ENCODE measurements at regions of chrX and their contacts with region 1.

Region 1: GRCh38 chrX:134969726-134970125 is 21.1 kb upstream of the SMIM10 start:
- DNase-seq: no peak
- H3K4me3 ChIP-seq: no peak overlapping the region
- H3K4me3 Mint-ChIP-seq: no peak overlapping the region
- H3K27ac ChIP-seq: no peak overlapping the region
- H3K27ac Mint-ChIP-seq: no peak overlapping the region
- H3K4me1 ChIP-seq: no peaks in the 10 kb centered on the region
- H3K4me1 Mint-ChIP-seq: no peaks in the 10 kb centered on the region
- H3K27me3 ChIP-seq: no peaks in the 10 kb centered on the region
- H3K27me3 Mint-ChIP-seq: peaks cover 0 to 5% of the 10 kb centered on the region in 2 donors

Region 2: GRCh38 chrX:134949271-134949670 is 20.5 kb before region 1 on chrX:
- CTCF ChIA-PET with region 1: no interaction called
- POLR2A ChIA-PET with region 1: no interaction called
- intact Hi-C with region 1: no loop called
- DNase-seq: no peak
- H3K4me3 ChIP-seq: no peak overlapping the region
- H3K4me3 Mint-ChIP-seq: no peak overlapping the region
- H3K27ac ChIP-seq: no peak overlapping the region
- H3K27ac Mint-ChIP-seq: no peak overlapping the region
- H3K4me1 ChIP-seq: no peaks in the 10 kb centered on the region
- H3K4me1 Mint-ChIP-seq: peaks cover 0 to 3% (median 0%) of the 10 kb centered on the region in 4 donors
- H3K27me3 ChIP-seq: no peaks in the 10 kb centered on the region
- H3K27me3 Mint-ChIP-seq: no peaks in the 10 kb centered on the region

Region 3: GRCh38 chrX:135003876-135004623 is 34.3 kb after region 1 on chrX:
- CTCF ChIA-PET with region 1: interaction called, 5 read pairs
- POLR2A ChIA-PET with region 1: no interaction called
- intact Hi-C with region 1: loop called (anchors 1 kb)
- DNase-seq: peak; percentile 87 to 88 (median 88)
- H3K4me3 ChIP-seq: peak overlapping the region; percentile 23 to 62
- H3K4me3 Mint-ChIP-seq: peak overlapping the region; percentile 86 to 91 (median 88)
- H3K27ac ChIP-seq: no peak overlapping the region
- H3K27ac Mint-ChIP-seq: peak overlapping the region; percentile 65 to 95 (median 73)
- H3K4me1 ChIP-seq: peaks cover 7% of the 10 kb centered on the region
- H3K4me1 Mint-ChIP-seq: peaks cover 5 to 13% (median 10%) of the 10 kb centered on the region in 4 donors
- H3K27me3 ChIP-seq: no peaks in the 10 kb centered on the region
- H3K27me3 Mint-ChIP-seq: no peaks in the 10 kb centered on the region

Region 4: DNA sequence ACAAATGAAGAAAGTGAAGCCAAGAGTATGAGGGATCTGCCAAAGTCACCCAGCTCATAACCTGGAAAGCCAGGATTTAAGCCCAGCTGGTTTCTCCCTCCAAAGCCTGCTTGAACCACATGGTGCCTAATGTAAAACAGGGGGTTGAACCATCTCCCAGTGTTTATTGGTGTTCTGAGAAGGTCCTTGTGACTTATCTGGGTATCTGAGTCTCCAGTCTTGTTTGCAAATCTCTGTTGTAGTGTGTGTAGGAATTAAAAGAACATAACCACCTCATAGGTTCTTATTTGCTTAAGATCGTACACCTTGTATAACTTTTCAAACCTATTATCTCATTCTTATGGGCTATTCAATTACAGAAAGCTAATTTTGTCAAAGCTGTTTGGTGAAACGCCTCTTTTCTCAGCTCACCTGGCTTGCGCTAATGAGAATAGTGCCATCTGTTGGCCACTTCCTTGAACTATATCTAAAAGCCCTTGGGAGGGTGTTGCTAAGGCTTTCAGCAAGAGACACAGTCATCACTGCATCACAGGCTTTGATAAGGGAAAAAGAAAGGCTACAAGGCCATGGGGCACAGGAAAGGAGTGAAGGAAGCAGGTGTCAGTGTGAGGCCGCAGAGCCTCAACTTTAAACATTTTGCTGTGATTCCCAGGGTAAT is 116.6 kb after region 1 on chrX:
- CTCF ChIA-PET with region 1: interaction called, 9 read pairs
- POLR2A ChIA-PET with region 1: no interaction called
- intact Hi-C with region 1: loop called (anchors 1 kb)
- DNase-seq: peak; percentile 56 to 67 (median 62)
- H3K4me3 ChIP-seq: no peak overlapping the region
- H3K4me3 Mint-ChIP-seq: no peak overlapping the region
- H3K27ac ChIP-seq: no peak overlapping the region
- H3K27ac Mint-ChIP-seq: peak overlapping the region in 5 of 7 donors; percentile 1 to 78 (median 15)
- H3K4me1 ChIP-seq: no peaks in the 10 kb centered on the region
- H3K4me1 Mint-ChIP-seq: peaks cover 1 to 6% (median 5%) of the 10 kb centered on the region in 4 donors
- H3K27me3 ChIP-seq: no peaks in the 10 kb centered on the region
- H3K27me3 Mint-ChIP-seq: peaks cover 0 to 5% of the 10 kb centered on the region in 2 donors

Region 5: DNA sequence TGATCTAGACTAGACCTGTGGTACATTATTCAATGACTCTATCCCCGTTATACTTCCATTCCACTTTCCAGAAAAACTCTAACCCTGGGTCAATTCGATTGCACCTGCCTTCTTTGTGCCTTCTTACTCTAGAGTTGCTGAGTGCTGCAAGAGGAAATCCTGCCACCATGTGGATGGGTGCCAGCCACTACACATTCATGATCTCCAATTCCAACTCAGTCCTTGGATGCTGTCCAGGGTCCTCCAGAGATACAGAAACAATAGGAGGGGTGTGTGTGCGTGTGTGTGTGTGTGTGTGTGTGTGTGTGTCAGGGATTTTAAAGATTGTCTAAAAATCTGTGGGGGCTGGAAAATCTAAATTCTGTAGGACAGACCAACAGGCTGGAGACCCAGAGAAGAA is 507.9 kb after region 1 on chrX:
- CTCF ChIA-PET with region 1: no interaction called
- POLR2A ChIA-PET with region 1: no interaction called
- intact Hi-C with region 1: loop called (anchors 1 kb)
- DNase-seq: peak; percentile 44 to 50 (median 46)
- H3K4me3 ChIP-seq: no peak overlapping the region
- H3K4me3 Mint-ChIP-seq: no peak overlapping the region
- H3K27ac ChIP-seq: no peak overlapping the region
- H3K27ac Mint-ChIP-seq: no peak overlapping the region
- H3K4me1 ChIP-seq: no peaks in the 10 kb centered on the region
- H3K4me1 Mint-ChIP-seq: peaks cover 2 to 5% (median 3%) of the 10 kb centered on the region in 4 donors
- H3K27me3 ChIP-seq: no peaks in the 10 kb centered on the region
- H3K27me3 Mint-ChIP-seq: peaks cover 0 to 2% of the 10 kb centered on the region in 2 donors

Region 6: GRCh38 chrX:136336623-136337022 is 1366.9 kb after region 1 on chrX:
- CTCF ChIA-PET with region 1: no interaction called
- POLR2A ChIA-PET with region 1: no interaction called
- intact Hi-C with region 1: no loop called
- DNase-seq: no peak
- H3K4me3 ChIP-seq: no peak overlapping the region
- H3K4me3 Mint-ChIP-seq: no peak overlapping the region
- H3K27ac ChIP-seq: no peak overlapping the region
- H3K27ac Mint-ChIP-seq: no peak overlapping the region
- H3K4me1 ChIP-seq: no peaks in the 10 kb centered on the region
- H3K4me1 Mint-ChIP-seq: no peaks in the 10 kb centered on the region
- H3K27me3 ChIP-seq: no peaks in the 10 kb centered on the region
- H3K27me3 Mint-ChIP-seq: peaks cover 0 to 1% of the 10 kb centered on the region in 2 donors

Measured in CD4-positive, alpha-beta memory T cell (primary cell).